WTC11 (cell line): ENCODE measurements at regions of chrX and their contacts with region 1.

Region 1: GRCh38 chrX:107450823-107451509 is 1.5 kb downstream of the FRMPD3 start:
- DNase-seq: peak; percentile 76
- ATAC-seq: peak; percentile 65
- H3K4me3 Mint-ChIP-seq: peak overlapping the region; percentile 76
- H3K27ac Mint-ChIP-seq: no peak overlapping the region; the same call in 1 of the 2 replicates
- H3K4me1 Mint-ChIP-seq: peaks cover 17% of the 10 kb centered on the region
- H3K27me3 Mint-ChIP-seq: peaks cover 36% of the 10 kb centered on the region
- CTCF ChIP-seq: peak; percentile 34; the same call in 1 of the 2 replicates

Region 2: DNA sequence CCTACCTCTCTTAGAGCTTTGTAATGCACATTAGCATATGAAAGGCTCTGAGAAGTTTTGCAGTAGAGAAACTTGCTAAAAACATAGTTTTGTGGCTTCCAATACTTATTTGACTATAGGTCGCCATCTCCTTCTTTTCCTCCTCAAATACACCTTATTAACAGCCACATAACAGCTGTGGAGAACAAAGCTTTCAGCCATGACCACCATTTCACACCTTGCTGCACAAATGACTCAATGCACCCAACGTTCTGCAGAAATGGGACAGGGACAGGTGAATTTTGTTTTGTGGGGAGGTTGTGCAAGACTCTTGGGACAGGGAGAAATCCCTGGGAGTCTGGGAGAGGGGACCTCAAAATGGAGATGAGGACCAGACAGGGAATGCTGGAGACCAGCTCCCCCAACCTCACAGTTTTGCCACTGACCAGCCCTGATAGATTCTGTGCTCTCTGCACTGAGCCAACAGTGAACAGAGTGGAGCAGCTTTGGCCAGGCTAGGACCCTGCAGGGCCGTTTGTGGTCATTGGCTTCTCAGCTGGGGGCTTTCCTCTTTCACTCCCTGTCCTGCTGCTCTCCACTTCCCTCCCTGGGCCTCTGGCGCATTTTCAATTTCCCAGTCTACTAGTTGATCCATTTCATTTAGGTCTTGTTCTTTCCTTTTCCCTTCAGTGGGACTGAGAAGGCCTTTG is 15.1 kb after region 1 on chrX:
- CTCF ChIA-PET with region 1: interaction called, 22 read pairs
- POLR2A ChIA-PET with region 1: no interaction called
- DNase-seq: no peak
- ATAC-seq: peak; percentile 53; the same call in 1 of the 2 replicates
- H3K4me3 Mint-ChIP-seq: no peak overlapping the region
- H3K27ac Mint-ChIP-seq: no peak overlapping the region
- H3K4me1 Mint-ChIP-seq: peaks cover 19% of the 10 kb centered on the region
- H3K27me3 Mint-ChIP-seq: no peaks in the 10 kb centered on the region
- CTCF ChIP-seq: no peak

Region 3: DNA sequence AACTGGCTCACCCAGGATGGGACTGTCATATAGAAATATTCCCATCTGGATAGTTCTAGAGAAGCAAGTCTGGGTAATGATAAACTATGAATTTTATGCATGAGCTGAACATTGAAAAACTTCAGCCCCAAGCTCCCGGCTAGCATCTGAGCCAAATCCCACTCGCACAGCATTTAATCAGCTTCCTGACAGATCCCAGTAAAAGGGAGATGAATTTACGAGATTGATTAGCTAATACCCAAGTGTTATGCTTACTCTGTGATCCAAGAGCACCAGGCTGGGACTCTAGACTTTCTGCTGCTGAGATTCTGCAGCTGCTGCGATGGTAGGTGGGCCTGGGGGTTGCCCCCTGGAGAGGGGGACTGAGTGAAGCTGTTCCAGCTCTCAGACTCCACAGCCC is 26.4 kb after region 1 on chrX:
- CTCF ChIA-PET with region 1: interaction called, 10 read pairs
- POLR2A ChIA-PET with region 1: no interaction called
- DNase-seq: no peak
- ATAC-seq: no peak
- H3K4me3 Mint-ChIP-seq: no peak overlapping the region
- H3K27ac Mint-ChIP-seq: no peak overlapping the region
- H3K4me1 Mint-ChIP-seq: 0 out of 2 replicates have a peak, but pooled peaks cover 8% of the 10 kb centered on the region
- H3K27me3 Mint-ChIP-seq: no peaks in the 10 kb centered on the region
- CTCF ChIP-seq: no peak

Region 4: GRCh38 chrX:107484002-107484726 is 33.2 kb after region 1 on chrX:
- CTCF ChIA-PET with region 1: interaction called, 15 read pairs
- POLR2A ChIA-PET with region 1: no interaction called
- DNase-seq: peak; percentile 14
- ATAC-seq: peak; percentile 63
- H3K4me3 Mint-ChIP-seq: no peak overlapping the region
- H3K27ac Mint-ChIP-seq: no peak overlapping the region
- H3K4me1 Mint-ChIP-seq: peaks cover 4% of the 10 kb centered on the region
- H3K27me3 Mint-ChIP-seq: no peaks in the 10 kb centered on the region
- CTCF ChIP-seq: no peak